AG04449 (cell line): ENCODE measurements at regions of chr1 and their contacts with region 1.

Region 1: DNA sequence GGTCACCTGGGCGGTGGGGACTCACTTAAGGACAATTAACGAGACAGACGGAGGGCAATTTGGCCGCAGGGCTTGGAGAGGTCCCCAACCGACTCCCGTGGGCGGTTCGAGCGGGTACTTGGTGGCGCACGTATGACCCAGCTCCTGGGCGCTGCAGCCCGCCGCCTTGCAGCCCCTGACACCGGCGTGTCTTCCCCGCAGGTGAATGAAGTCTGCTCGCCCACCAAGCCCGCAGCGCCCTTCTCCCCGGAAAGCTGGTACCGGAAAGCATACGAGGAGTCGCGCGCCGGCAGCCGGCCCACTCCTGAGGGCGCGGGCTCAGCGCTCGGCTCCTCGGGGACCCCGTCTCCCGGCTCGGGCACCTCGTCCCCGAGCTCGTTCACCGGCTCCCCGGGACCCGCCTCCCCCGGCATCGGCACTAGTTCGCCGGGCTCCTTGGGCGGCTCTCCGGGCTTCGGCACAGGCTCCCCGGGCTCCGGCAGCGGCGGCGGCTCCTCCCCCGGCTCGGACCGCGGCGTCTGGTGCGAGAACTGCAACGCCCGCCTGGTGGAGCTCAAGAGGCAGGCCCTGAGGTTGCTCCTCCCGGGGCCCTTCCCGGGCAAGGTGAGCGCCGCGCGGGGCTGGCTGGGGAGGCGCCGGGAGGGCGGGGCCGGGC is 1.4 kb downstream of the KIF26B start:
- DNase-seq: no peak
- H3K4me3 ChIP-seq: peak overlapping the region; percentile 68
- CTCF ChIP-seq: peak; percentile 93

Region 2: GRCh38 chr1:245031041-245031440 is 125.2 kb before region 1 on chr1:
- CTCF ChIA-PET with region 1: no interaction called
- POLR2A ChIA-PET with region 1: no interaction called
- DNase-seq: no peak
- H3K4me3 ChIP-seq: no peak overlapping the region
- CTCF ChIP-seq: no peak

Region 3: DNA sequence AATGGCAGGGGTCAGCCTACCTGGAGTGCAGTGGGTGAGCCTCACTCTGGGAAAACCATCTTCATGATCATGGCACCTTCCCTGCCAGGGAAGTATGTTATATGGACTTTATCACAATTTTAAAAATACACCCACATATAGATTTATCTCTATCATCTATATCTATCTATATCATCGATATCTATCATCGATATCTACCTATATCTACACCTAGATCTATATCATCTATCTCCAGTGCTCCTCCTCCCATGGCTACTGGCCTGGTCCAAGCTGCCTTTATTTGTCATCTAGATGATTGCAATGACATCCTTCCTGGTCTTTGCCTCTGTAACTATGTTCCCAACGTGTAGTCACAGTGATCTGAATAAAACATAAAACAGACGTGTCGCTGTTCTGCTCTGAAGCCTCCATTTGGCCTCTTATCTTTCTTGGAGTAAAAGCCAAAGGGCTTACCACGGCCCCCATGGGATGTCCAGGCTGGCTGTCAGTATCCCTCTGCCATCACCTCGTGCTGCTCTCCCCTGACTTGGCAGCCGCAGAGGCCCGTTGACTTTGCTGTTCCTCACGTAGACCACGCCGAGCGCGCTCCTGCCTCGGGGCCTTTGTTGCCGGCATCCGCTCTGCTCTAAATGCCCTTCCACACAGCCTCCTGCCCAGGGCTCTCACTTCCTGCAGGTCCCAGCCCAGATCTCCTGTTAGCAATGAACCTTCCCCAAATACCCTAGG is 22.1 kb before region 1 on chr1:
- CTCF ChIA-PET with region 1: interaction called, 14 read pairs
- POLR2A ChIA-PET with region 1: no interaction called
- DNase-seq: no peak
- H3K4me3 ChIP-seq: no peak overlapping the region
- CTCF ChIP-seq: no peak

Region 4: DNA sequence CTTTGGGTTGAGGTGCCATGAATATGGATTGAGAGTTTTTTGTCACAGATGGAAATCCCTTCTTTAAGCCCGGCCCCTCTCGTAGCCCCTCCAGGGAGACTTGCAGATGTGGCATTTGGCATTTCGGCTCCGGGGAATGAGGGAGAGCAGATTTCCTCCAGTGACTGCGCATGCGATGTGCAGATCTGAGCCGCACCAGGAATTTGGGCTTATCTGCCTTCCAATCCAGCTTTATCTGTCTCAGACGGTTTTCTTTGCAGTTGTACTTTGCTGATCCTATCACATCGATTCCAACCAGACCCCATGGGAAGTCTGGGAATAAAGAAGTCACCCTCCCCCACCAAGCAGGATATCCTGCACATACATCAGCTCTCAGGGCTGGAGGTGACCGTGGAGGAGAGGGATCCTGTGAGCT is 10.3 kb after region 1 on chr1:
- CTCF ChIA-PET with region 1: interaction called, 42 read pairs
- POLR2A ChIA-PET with region 1: no interaction called
- DNase-seq: no peak
- H3K4me3 ChIP-seq: peak overlapping the region; percentile 40
- CTCF ChIP-seq: no peak

Region 5: GRCh38 chr1:245209658-245210435 is 53.6 kb after region 1 on chr1:
- CTCF ChIA-PET with region 1: no interaction called
- POLR2A ChIA-PET with region 1: no interaction called
- DNase-seq: no peak
- H3K4me3 ChIP-seq: no peak overlapping the region
- CTCF ChIP-seq: no peak

Region 6: GRCh38 chr1:245715970-245716369 is 559.8 kb after region 1 on chr1:
- CTCF ChIA-PET with region 1: no interaction called
- POLR2A ChIA-PET with region 1: no interaction called
- DNase-seq: peak; percentile 31
- H3K4me3 ChIP-seq: no peak overlapping the region
- CTCF ChIP-seq: no peak

Region 7: GRCh38 chr1:245874942-245875580 is 718.9 kb after region 1 on chr1:
- CTCF ChIA-PET with region 1: interaction called, 13 read pairs
- POLR2A ChIA-PET with region 1: no interaction called
- DNase-seq: peak; percentile 97
- H3K4me3 ChIP-seq: no peak overlapping the region; the same call in 1 of the 2 replicates
- CTCF ChIP-seq: no peak

Region 8: DNA sequence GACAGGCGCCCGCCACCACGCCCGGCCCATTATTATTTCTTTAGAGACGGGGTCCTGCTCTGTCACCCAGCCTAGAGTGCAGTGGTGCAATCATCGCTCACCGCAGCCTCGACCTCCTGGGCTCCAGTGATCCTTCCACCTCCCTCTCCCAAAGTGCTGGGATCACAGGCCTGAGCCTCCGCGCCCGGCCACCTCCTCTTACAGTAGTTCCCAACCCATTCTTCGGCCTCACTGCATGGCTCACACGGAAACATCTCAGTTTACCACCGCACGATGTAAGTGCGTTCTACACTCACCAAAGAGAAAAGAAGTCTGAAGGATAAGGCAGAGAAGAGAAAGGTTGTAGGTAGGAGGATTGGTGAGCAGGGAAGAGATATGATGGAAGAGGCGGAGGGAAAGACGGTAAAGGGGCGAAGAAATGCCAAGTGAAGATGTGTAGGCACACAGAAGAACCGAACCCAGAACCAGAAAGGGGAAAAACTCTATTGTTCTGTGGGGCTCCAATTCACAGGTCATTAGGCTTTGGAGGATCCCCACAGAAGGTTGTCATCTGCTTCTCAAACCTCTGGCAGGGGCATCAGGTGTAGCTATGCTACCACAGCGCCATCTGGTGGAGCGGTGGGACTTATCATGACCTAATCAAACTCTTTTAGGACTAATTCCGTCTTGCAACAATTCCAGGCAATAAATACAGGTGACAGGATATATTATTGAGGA is 846.7 kb after region 1 on chr1:
- CTCF ChIA-PET with region 1: interaction called, 80 read pairs
- POLR2A ChIA-PET with region 1: no interaction called
- DNase-seq: no peak
- H3K4me3 ChIP-seq: no peak overlapping the region
- CTCF ChIP-seq: peak; percentile 75

Region 9: GRCh38 chr1:246280551-246280950 is 1124.3 kb after region 1 on chr1:
- CTCF ChIA-PET with region 1: interaction called, 46 read pairs
- POLR2A ChIA-PET with region 1: no interaction called
- DNase-seq: no peak
- H3K4me3 ChIP-seq: no peak overlapping the region
- CTCF ChIP-seq: peak; percentile 9

Region 10: GRCh38 chr1:246497331-246497915 is 1341.2 kb after region 1 on chr1:
- CTCF ChIA-PET with region 1: interaction called, 99 read pairs
- POLR2A ChIA-PET with region 1: no interaction called
- DNase-seq: no peak
- H3K4me3 ChIP-seq: no peak overlapping the region
- CTCF ChIP-seq: peak; percentile 52